OCI-LY7 (cell line): ENCODE measurements at regions of chr7 and their contacts with region 1.

Region 1: DNA sequence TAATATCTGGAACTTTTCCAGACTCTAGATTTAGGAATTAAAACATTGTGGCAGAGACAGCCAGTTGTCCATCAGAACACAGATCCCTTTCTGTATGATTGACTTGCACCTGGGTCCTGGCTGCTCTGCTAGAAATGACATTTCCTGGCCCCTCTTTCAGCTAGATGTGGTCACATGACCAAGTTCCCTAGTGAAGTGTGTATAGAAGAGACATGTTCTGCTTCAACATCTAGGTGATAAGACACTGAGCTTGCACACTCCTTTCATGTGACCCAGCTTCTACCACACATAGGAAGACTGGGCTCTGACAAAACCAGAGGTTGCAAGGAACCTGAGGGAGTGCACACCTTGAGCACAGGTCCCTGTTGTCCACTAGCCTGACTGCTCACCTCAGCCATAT is 22.8 kb upstream of the DYNC1I1 start:
- DNase-seq: no peak
- H3K4me3 ChIP-seq: no peak overlapping the region
- H3K27ac ChIP-seq: no peak overlapping the region
- H3K4me1 ChIP-seq: no peaks in the 10 kb centered on the region
- CTCF ChIP-seq: no peak

Region 2: DNA sequence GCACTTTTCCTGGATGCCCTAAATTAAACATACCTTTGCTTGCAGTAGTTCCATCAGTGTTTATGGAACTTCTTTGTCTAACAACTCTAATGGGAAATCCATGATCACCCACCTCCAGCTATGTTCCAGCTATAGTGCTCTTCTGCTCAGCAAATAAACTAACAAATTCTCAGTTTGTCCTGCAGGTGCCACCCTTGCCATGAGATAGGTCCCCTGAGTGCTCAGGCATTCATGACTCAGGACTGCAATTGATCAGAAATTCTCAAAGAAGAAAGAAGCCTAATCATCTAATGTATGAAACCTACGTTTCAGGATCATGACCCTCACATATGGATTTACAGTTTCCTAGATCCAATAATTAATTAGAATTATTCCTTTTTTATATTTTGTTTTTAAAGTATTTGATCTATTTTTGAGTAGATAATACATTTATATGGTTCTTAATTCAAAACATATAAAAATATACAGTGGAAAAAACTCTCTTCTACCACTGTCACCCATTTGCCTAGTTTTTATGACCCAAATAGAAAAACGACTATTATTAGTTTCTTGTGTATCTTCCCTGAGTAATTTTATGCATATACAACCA is 25.8 kb before region 1 on chr7:
- CTCF ChIA-PET with region 1: no interaction called
- POLR2A ChIA-PET with region 1: no interaction called
- intact Hi-C with region 1: loop called (anchors 1 kb)
- DNase-seq: peak; percentile 5
- H3K4me3 ChIP-seq: no peak overlapping the region
- H3K27ac ChIP-seq: no peak overlapping the region
- H3K4me1 ChIP-seq: no peaks in the 10 kb centered on the region
- CTCF ChIP-seq: peak; percentile 47

Region 3: DNA sequence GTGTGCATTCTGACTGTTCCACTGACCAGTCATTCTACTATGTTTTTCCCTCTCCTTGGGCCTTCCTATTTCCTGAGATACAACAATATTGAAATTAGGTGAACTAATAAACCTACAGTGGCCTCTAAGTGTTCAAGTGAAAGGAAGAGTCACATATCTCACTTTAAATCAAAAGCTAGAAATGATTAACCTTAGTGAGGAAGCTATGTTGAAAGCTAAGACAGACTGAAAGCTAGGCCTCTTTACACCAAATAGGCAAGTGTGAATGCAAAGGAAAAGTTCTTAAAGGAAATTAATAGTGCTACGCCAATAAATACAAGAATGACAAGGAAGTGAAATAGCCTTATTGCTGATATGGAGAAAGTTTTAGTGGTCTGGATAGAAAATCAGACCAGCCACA is 17.1 kb after region 1 on chr7:
- CTCF ChIA-PET with region 1: no interaction called
- POLR2A ChIA-PET with region 1: no interaction called
- intact Hi-C with region 1: no loop called
- DNase-seq: no peak
- H3K4me3 ChIP-seq: no peak overlapping the region
- H3K27ac ChIP-seq: no peak overlapping the region
- H3K4me1 ChIP-seq: no peaks in the 10 kb centered on the region
- CTCF ChIP-seq: no peak

Region 4: GRCh38 chr7:96075510-96076349 is 326.2 kb after region 1 on chr7:
- CTCF ChIA-PET with region 1: no interaction called
- POLR2A ChIA-PET with region 1: no interaction called
- intact Hi-C with region 1: no loop called
- DNase-seq: peak; percentile 25
- H3K4me3 ChIP-seq: no peak overlapping the region
- H3K27ac ChIP-seq: no peak overlapping the region
- H3K4me1 ChIP-seq: no peaks in the 10 kb centered on the region
- CTCF ChIP-seq: peak; percentile 71